ENCODE measurements at regions of chr14 and their contacts with region 1.

Region 1: DNA sequence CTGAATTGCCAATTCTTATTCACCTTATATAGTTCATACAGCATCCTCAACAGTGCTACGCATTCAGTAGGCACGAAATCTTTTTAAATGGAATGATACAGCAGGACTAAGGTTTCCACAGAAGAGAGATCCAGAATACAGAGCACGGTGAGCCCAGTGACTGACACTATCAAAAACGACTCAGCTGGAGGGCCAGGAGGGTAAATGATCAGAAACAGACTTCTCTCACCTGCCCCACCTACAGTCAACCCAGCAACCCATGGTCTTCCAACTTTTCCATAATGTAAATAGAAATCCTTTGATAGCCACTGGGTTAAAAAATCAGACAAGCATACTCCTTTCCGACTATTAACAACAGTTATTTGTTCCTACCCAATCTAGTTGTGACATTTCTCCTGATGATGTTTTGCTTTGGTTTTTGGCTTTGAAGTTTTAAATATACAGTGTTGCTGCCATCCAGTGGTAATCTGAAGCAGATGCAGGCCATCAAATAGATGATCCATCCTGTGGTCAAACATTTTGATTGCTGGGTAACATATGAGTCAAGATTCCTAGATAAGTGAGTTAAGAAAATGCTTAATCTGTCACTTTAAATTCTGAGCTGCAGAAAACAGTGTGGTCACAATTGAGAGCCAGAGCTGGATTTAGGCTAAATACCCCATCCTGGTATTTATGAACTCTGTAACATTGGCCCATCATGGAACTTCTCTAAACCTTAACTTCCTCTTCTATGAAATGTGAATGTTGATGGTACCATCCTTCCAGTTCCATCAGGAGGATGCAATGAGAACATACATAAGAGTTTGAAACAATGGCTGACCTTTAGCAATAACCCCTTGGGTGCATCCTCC is 42.0 kb downstream of the GPHB5 start:
- DNase-seq: no peak
- H3K4me3 Mint-ChIP-seq: no peak overlapping the region
- H3K27ac Mint-ChIP-seq: no peak overlapping the region
- H3K4me1 Mint-ChIP-seq: no peaks in the 10 kb centered on the region
- H3K27me3 Mint-ChIP-seq: peaks cover 7% of the 10 kb centered on the region

Region 2: DNA sequence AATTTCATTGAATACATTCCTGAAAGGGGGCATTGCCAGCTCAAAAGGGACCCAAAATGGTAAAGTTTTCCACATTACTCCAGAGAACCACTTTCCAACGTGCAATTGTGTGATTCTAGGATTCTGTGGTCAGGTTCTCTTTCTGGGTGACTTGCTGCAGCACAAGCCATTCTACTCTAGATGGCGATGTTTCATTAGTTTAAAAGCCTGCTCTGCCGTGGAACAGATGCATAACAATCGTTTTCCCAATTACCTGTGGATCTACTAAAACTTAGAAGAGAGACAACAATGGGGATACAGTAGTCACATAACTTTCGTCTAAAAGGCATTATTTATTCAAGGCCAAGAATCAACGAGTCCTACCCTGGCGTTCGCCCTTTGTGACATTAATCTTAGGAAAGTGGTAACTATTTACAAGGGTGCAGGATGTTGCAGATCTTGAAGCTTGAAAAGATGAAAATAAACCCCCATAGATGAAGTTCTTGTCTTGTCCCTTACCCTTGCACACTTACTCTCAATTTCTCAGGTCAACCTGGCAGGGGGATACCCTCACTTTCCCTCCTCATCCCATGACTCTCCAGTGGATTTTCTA is 1113.6 kb before region 1 on chr14:
- CTCF ChIA-PET with region 1: interaction called, 4 read pairs
- POLR2A ChIA-PET with region 1: no interaction called
- intact Hi-C with region 1: loop called (anchors 2 kb)
- DNase-seq: no peak
- H3K4me3 Mint-ChIP-seq: no peak overlapping the region
- H3K27ac Mint-ChIP-seq: no peak overlapping the region
- H3K4me1 Mint-ChIP-seq: no peaks in the 10 kb centered on the region
- H3K27me3 Mint-ChIP-seq: peaks cover 22% of the 10 kb centered on the region

Region 3: GRCh38 chr14:62179367-62180018 is 1097.2 kb before region 1 on chr14:
- CTCF ChIA-PET with region 1: interaction called, 13 read pairs
- POLR2A ChIA-PET with region 1: no interaction called
- intact Hi-C with region 1: loop called (anchors 1 kb)
- DNase-seq: peak; percentile 41
- H3K4me3 Mint-ChIP-seq: no peak overlapping the region
- H3K27ac Mint-ChIP-seq: no peak overlapping the region
- H3K4me1 Mint-ChIP-seq: no peaks in the 10 kb centered on the region
- H3K27me3 Mint-ChIP-seq: peaks cover 7% of the 10 kb centered on the region

Region 4: GRCh38 chr14:63174760-63175211 is 101.9 kb before region 1 on chr14:
- CTCF ChIA-PET with region 1: interaction called, 5 read pairs
- POLR2A ChIA-PET with region 1: no interaction called
- intact Hi-C with region 1: loop called (anchors 1 kb)
- DNase-seq: no peak
- H3K4me3 Mint-ChIP-seq: no peak overlapping the region
- H3K27ac Mint-ChIP-seq: no peak overlapping the region
- H3K4me1 Mint-ChIP-seq: no peaks in the 10 kb centered on the region
- H3K27me3 Mint-ChIP-seq: peaks cover 5% of the 10 kb centered on the region

Region 5: GRCh38 chr14:63299351-63300110 is 22.8 kb after region 1 on chr14:
- CTCF ChIA-PET with region 1: no interaction called
- POLR2A ChIA-PET with region 1: no interaction called
- intact Hi-C with region 1: no loop called
- DNase-seq: no peak
- H3K4me3 Mint-ChIP-seq: no peak overlapping the region
- H3K27ac Mint-ChIP-seq: no peak overlapping the region
- H3K4me1 Mint-ChIP-seq: peaks cover 13% of the 10 kb centered on the region
- H3K27me3 Mint-ChIP-seq: peaks cover 13% of the 10 kb centered on the region

Measured in activated CD4-positive, alpha-beta memory T cell treated with anti-CD3 and anti-CD28 coated beads for 36 hours (primary cell).